Thyroid gland (tissue), 4 donors: ENCODE measurements at regions of chr3 and their contacts with region 1.

Region 1: DNA sequence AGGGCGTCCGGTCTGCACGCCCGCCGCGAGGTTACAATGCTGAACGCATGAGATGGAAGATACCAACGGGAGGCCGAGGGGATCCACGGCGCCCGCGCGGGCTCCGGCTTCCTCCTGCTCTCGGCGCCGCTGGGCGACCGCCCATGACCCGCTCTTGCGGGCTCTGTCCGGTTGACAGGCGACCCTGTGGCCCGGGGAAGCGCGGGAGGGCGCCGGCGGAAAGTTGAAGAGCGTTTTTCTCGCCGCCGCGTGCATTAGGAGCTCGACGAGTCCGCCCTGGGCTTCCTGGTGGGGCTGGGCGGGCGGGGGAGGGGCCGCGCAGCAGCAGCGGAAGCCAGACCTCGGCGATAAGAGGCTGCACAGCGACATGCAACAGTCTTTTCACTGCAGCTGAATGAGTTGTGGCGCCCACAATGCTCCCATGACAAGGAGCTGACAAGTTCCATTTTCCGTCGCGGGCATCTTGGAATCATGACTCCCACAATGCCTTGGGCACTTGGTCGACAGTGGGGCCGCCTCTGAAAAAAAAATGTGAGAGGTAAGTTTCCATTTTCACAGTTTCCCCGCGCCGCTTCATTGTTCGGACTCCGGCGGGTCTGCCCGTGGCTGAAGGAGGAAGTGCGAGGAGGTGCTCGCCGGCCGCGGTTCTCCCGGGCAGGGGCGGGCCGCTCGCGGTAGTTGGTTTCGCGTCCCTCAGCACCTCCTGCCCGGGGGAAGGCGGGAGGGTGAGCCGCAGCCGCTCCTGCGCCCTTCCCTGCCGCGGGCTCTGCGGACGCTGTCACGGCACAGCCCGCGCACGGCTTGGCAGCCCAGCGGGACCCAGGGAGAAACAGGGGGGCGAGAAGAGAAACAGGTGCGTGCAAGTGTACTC is at the start of gene MBNL1:
- DNase-seq: peak; percentile 79 to 80
- H3K4me3 ChIP-seq: peak within 1 kb of the TSS; percentile 93 to 95 (median 95)
- H3K27ac ChIP-seq: peak within 1 kb of the TSS; percentile 94 to 99 (median 99)
- H3K4me1 ChIP-seq: peaks cover 26 to 27% of the 10 kb centered on the region in 2 donors
- H3K27me3 ChIP-seq: no peaks in the 10 kb centered on the region
- CTCF ChIP-seq: no peak
- POLR2A ChIP-seq: peak; percentile 7 to 69
- total RNA-seq, gene MBNL1: 190 to 279 (median 216) TPM

Region 2: DNA sequence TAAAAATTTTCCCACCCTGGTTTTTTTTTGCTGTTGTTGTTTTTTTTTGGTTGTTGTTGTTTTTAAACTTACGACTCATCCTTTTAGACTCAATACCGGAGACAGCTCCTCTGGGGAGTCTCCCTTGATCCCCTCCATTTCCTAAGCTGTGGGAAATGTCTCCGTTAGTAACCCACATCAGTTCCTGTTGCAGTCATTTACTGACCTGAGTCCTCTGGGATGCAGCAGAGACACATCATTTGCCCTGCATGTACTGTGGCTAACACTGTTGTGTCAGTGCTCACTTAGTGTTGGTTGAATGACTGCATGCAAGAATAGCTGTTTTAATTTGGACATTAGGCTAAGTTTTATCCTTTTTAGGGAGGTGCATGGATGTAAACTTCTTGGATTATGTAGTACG is 83.8 kb after region 1 on chr3:
- intact Hi-C with region 1: no loop called
- DNase-seq: no peak
- H3K4me3 ChIP-seq: no peak overlapping the region
- H3K27ac ChIP-seq: peak overlapping the region in 1 of 3 donors; percentile 4
- H3K4me1 ChIP-seq: peaks cover 13 to 15% of the 10 kb centered on the region in 2 donors
- H3K27me3 ChIP-seq: no peaks in the 10 kb centered on the region
- CTCF ChIP-seq: no peak
- POLR2A ChIP-seq: no peak

Region 3: DNA sequence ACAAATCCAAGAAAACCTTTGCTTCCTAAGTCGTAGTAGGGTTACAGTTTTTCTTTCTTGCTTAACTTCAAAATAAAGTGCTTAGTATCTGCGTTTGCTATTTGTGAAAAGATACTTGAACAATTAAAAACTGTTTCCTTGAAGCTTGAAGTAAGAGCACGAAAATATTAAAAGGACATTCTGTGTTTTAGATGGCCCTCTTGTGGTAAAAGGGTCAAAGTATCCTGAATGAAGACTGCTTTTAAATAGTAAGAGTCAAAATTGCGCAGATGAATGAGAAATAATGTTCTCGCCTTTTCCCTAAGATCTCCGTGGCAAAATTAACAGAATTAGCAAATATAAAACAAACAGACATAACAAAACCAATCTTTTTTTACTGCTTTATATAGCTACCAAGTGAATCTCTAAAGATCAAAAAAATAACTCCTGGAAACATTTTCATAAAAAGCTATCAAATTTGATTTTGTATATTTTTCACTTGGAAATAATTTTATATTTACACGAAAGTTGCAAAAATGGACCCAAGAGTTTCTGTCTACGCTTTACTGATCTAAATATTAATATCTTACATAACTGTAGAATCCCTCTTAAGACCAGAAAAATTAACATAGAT is 175.3 kb after region 1 on chr3:
- intact Hi-C with region 1: loop called (anchors 10 kb)
- DNase-seq: no peak
- H3K4me3 ChIP-seq: no peak overlapping the region
- H3K27ac ChIP-seq: no peak overlapping the region
- H3K4me1 ChIP-seq: peaks cover 4 to 7% of the 10 kb centered on the region in 2 donors
- H3K27me3 ChIP-seq: no peaks in the 10 kb centered on the region
- CTCF ChIP-seq: peak; percentile 26 to 84 (median 54)
- POLR2A ChIP-seq: no peak